B cell (primary cell): ENCODE measurements at regions of chr20 and their contacts with region 1.

Region 1: GRCh38 chr20:25390538-25391528 is at the start of gene ABHD12:
- DNase-seq: peak; percentile 94
- ATAC-seq: peak; percentile 91
- H3K4me3 ChIP-seq: peak within 1 kb of the TSS; percentile 66 to 85 (median 72)
- H3K4me3 Mint-ChIP-seq: peak within 1 kb of the TSS; percentile 93
- H3K27ac ChIP-seq: peak within 1 kb of the TSS; percentile 8 to 58
- H3K27ac Mint-ChIP-seq: peak within 1 kb of the TSS; percentile 90
- H3K4me1 ChIP-seq: peaks cover 6 to 7% of the 10 kb centered on the region in 2 donors
- H3K4me1 Mint-ChIP-seq: peaks cover 20% of the 10 kb centered on the region
- H3K27me3 ChIP-seq: no peaks in the 10 kb centered on the region
- H3K27me3 Mint-ChIP-seq: no peaks in the 10 kb centered on the region
- CTCF ChIP-seq: no peak
- total RNA-seq, gene ABHD12: 27.7 and 28.3 TPM in 2 replicates

Region 2: GRCh38 chr20:23420943-23421931 is 1969.6 kb before region 1 on chr20 and contains the start of gene NAPB:
- CTCF ChIA-PET with region 1: no interaction called
- POLR2A ChIA-PET with region 1: no interaction called
- intact Hi-C with region 1: loop called (anchors 5 kb)
- DNase-seq: peak; percentile 92
- ATAC-seq: peak; percentile 98
- H3K4me3 ChIP-seq: peak within 1 kb of the TSS; percentile 50 to 92 (median 85)
- H3K4me3 Mint-ChIP-seq: peak within 1 kb of the TSS; percentile 91
- H3K27ac ChIP-seq: peak within 1 kb of the TSS; percentile 50 to 80
- H3K27ac Mint-ChIP-seq: peak within 1 kb of the TSS; percentile 90
- H3K4me1 ChIP-seq: peaks cover 13 to 14% of the 10 kb centered on the region in 2 donors
- H3K4me1 Mint-ChIP-seq: peaks cover 21% of the 10 kb centered on the region
- H3K27me3 ChIP-seq: no peaks in the 10 kb centered on the region
- H3K27me3 Mint-ChIP-seq: peaks cover 14% of the 10 kb centered on the region
- CTCF ChIP-seq: peak; percentile 44
- total RNA-seq, gene NAPB: 13.0 and 16.6 TPM in 2 replicates

Region 3: DNA sequence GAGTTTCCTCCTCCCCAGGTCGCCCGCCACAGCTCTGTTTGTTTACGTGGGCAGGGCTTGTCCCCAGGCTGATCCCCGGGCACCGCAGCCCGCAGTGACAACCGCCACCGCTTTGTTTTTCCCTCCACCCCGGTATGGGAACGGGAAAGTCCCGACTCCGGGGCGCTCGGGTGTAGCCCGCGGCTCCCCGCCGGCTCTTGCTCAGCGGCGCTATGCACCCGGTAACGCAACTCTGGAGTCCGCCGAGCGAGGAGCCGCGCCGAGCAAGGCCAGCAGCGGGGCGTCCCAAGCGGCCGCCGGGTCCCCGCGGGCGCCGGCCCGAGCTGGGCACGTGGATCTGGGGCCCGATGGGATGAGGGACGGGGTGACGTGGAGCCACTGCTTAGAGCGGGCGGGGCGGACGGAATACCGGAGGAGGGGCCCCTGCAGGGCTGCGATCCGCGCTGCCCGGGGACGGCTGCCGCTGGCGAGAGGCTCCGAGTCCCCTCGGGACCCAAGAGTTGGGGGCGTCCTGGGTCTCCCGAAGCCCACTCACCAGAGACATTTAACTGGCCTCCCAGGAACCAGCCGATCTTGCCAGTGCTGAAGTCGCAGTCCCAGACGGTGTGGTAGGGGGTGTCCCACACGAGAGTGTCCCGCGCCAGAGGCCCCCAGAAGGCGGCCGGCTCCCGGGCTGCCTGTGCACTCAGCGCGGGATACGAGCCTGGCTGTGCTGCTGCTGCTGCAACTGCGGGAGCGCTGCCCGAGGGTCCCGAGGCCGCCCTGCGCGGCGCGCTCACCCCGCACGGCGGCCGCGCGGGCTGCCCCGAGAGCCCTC is 333.4 kb before region 1 on chr20:
- CTCF ChIA-PET with region 1: no interaction called
- POLR2A ChIA-PET with region 1: no interaction called
- intact Hi-C with region 1: loop called (anchors 2 kb)
- DNase-seq: peak; percentile 89
- ATAC-seq: peak; percentile 41
- H3K4me3 ChIP-seq: peak overlapping the region; percentile 45 to 91 (median 76)
- H3K4me3 Mint-ChIP-seq: peak overlapping the region; percentile 93
- H3K27ac ChIP-seq: peak overlapping the region; percentile 90 to 93
- H3K27ac Mint-ChIP-seq: peak overlapping the region; percentile 97
- H3K4me1 ChIP-seq: peaks cover 58 to 63% of the 10 kb centered on the region in 2 donors
- H3K4me1 Mint-ChIP-seq: peaks cover 60% of the 10 kb centered on the region
- H3K27me3 ChIP-seq: no peaks in the 10 kb centered on the region
- H3K27me3 Mint-ChIP-seq: no peaks in the 10 kb centered on the region
- CTCF ChIP-seq: no peak

Region 4: GRCh38 chr20:25247956-25248785 is 142.7 kb before region 1 on chr20 and contains the start of gene PYGB:
- CTCF ChIA-PET with region 1: no interaction called
- POLR2A ChIA-PET with region 1: interaction called, 4 read pairs
- intact Hi-C with region 1: loop called (anchors 1 kb)
- DNase-seq: peak; percentile 84
- ATAC-seq: peak; percentile 87
- H3K4me3 ChIP-seq: peak within 1 kb of the TSS; percentile 11 to 96 (median 88)
- H3K4me3 Mint-ChIP-seq: peak within 1 kb of the TSS; percentile 96
- H3K27ac ChIP-seq: peak within 1 kb of the TSS in 1 of 2 donors; percentile 55
- H3K27ac Mint-ChIP-seq: peak within 1 kb of the TSS; percentile 88
- H3K4me1 ChIP-seq: peaks cover 18 to 21% of the 10 kb centered on the region in 2 donors
- H3K4me1 Mint-ChIP-seq: peaks cover 31% of the 10 kb centered on the region
- H3K27me3 ChIP-seq: peaks cover 0 to 9% (median 3%) of the 10 kb centered on the region in 4 experiments
- H3K27me3 Mint-ChIP-seq: peaks cover 12% of the 10 kb centered on the region
- CTCF ChIP-seq: no peak
- total RNA-seq, gene PYGB: 30.6 and 30.8 TPM in 2 replicates

Region 5: GRCh38 chr20:25310268-25310920 is 80.4 kb before region 1 on chr20:
- CTCF ChIA-PET with region 1: interaction called, 4 read pairs
- POLR2A ChIA-PET with region 1: no interaction called
- intact Hi-C with region 1: loop called (anchors 1 kb)
- DNase-seq: no peak
- ATAC-seq: peak; percentile 90
- H3K4me3 ChIP-seq: peak overlapping the region in 4 of 5 experiments; percentile 0 to 16 (median 4)
- H3K4me3 Mint-ChIP-seq: peak overlapping the region; percentile 70
- H3K27ac ChIP-seq: peak overlapping the region in 1 of 2 donors; percentile 16
- H3K27ac Mint-ChIP-seq: peak overlapping the region; percentile 82
- H3K4me1 ChIP-seq: peaks cover 10 to 19% of the 10 kb centered on the region in 2 donors
- H3K4me1 Mint-ChIP-seq: peaks cover 24% of the 10 kb centered on the region
- H3K27me3 ChIP-seq: no peaks in the 10 kb centered on the region
- H3K27me3 Mint-ChIP-seq: no peaks in the 10 kb centered on the region
- CTCF ChIP-seq: no peak

Region 6: DNA sequence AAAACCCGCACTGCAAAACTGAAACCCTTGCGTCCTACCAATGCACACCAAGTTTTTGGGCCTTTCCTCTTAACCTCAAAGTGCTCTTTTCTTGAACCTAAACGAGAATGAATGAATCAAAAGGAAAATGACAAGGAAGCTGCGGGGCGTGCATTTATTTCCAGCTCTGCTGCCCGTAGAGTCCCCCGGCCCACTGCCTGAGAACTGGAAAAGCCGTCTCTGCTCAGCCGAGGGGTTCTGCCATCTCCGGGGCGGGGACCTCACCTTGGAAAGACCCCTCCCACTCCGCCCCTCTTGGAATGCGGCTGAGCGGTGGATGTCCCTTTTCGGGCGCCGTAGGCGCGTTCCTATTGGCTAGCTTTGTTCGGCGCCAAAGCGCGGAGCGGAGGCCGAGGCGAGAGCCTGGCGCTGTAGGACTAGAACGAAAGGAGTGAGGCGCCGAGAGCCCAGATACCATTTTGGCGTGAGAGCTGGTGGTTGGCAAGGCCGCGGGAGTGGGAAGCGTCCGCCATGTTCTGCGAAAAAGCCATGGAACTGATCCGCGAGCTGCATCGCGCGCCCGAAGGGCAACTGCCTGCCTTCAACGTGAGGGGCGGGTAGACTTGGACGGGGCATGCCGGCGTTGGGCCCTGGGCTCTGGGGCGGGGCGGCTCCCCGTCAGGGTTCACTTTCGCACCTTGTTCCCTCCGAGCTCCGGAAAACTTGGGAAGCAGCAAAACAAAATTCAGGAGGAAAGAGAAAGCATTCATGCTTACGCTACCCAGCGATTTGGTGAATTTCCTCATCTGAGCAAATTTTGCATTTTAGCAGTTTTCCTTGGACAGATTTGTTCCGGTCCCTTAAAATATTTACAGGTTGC is 16.7 kb after region 1 on chr20 and contains the start of gene GINS1:
- CTCF ChIA-PET with region 1: interaction called, 40 read pairs
- POLR2A ChIA-PET with region 1: interaction called, 3 read pairs
- intact Hi-C with region 1: loop called (anchors 1 kb)
- DNase-seq: peak; percentile 83
- ATAC-seq: peak; percentile 95
- H3K4me3 ChIP-seq: peak within 1 kb of the TSS; percentile 71 to 80 (median 74)
- H3K4me3 Mint-ChIP-seq: peak within 1 kb of the TSS; percentile 95
- H3K27ac ChIP-seq: peak within 1 kb of the TSS in 1 of 2 donors; percentile 69
- H3K27ac Mint-ChIP-seq: peak within 1 kb of the TSS; percentile 85
- H3K4me1 ChIP-seq: peaks cover 5 to 6% of the 10 kb centered on the region in 2 donors
- H3K4me1 Mint-ChIP-seq: peaks cover 12% of the 10 kb centered on the region
- H3K27me3 ChIP-seq: no peaks in the 10 kb centered on the region
- H3K27me3 Mint-ChIP-seq: no peaks in the 10 kb centered on the region
- CTCF ChIP-seq: no peak
- total RNA-seq, gene GINS1: 2.0 and 3.6 TPM in 2 replicates

Region 7: DNA sequence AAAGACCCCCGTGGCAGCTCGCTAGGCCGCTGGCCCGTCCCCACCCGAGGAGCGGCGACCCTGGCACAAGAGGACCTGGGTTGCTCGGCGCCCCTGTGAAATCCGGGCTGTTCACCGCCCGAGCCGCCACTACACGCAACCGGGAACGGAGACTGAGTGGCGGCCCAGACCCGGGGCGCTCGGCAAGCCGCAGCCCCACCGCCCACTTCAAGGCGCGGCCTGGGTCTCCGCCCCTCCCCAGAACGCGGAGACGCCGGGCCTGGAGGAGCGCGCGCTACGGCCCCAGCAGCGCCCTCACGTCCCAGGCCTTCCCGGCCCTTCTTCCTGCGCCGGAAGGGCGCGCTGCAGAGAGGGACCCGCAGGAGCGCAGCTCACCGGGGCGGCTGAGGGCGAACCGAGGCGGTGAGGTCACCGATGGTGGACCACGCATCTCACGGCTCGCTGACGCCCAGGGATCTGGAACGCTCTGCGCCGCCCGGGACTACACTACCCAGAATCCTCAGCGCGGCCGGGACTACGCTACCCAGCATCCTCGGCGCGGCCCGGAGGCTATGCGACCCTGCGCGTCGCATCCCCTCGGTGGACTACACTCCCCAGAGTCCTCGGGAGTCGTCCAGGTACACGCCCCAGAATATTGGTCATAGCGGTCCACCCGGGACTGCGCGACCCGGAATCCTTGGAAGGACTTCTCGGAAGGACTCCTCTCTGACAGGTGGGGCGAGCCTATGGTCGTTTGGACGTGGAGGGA is 305.7 kb after region 1 on chr20 and contains the start of gene ZNF337:
- CTCF ChIA-PET with region 1: no interaction called
- POLR2A ChIA-PET with region 1: no interaction called
- intact Hi-C with region 1: loop called (anchors 1 kb)
- DNase-seq: peak; percentile 93
- ATAC-seq: peak; percentile 97
- H3K4me3 ChIP-seq: peak within 1 kb of the TSS; percentile 34 to 92 (median 84)
- H3K4me3 Mint-ChIP-seq: peak within 1 kb of the TSS; percentile 96
- H3K27ac ChIP-seq: peak within 1 kb of the TSS; percentile 71 to 90
- H3K27ac Mint-ChIP-seq: peak within 1 kb of the TSS; percentile 93
- H3K4me1 ChIP-seq: peaks cover 4 to 7% of the 10 kb centered on the region in 2 donors
- H3K4me1 Mint-ChIP-seq: peaks cover 26% of the 10 kb centered on the region
- H3K27me3 ChIP-seq: no peaks in the 10 kb centered on the region
- H3K27me3 Mint-ChIP-seq: no peaks in the 10 kb centered on the region
- CTCF ChIP-seq: no peak
- total RNA-seq, gene ZNF337: 24.7 and 27.1 TPM in 2 replicates